ENCODE measurements at regions of chr2 and their contacts with region 1.

Region 1: GRCh38 chr2:162291748-162292147 is 26.7 kb downstream of the IFIH1 start:
- DNase-seq: no peak
- H3K4me3 ChIP-seq: no peak overlapping the region
- H3K27me3 ChIP-seq: no peaks in the 10 kb centered on the region
- CTCF ChIP-seq: no peak

Region 2: GRCh38 chr2:162153608-162154224 is 138.0 kb before region 1 on chr2:
- CTCF ChIA-PET with region 1: interaction called, 106 read pairs
- POLR2A ChIA-PET with region 1: no interaction called
- DNase-seq: no peak
- H3K4me3 ChIP-seq: no peak overlapping the region
- H3K27me3 ChIP-seq: peaks cover 2% of the 10 kb centered on the region; the same call in 1 of the 2 replicates
- CTCF ChIP-seq: peak; percentile 64

Region 3: DNA sequence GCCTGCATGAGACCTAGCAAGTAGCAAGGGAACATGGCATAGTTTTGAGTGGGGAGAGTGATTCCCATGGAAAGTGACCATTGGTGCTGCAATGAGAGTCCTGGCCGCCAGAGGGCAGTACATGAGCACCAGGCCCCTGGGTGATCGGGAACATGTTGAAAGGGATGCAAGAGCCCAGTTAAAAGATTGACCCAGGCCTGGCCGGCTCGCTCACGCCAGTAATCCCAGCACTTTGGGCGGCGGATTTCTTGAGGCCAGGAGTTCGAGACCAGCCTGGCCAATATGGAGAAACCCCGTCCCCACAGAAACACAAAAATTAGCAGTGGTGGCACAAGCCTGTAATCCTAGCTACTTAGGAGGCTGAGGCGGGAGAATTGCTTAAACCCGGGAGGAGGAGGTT is 70.7 kb before region 1 on chr2:
- CTCF ChIA-PET with region 1: interaction called, 137 read pairs
- POLR2A ChIA-PET with region 1: no interaction called
- DNase-seq: no peak
- H3K4me3 ChIP-seq: no peak overlapping the region
- H3K27me3 ChIP-seq: no peaks in the 10 kb centered on the region
- CTCF ChIP-seq: peak; percentile 90